Gastrocnemius medialis (tissue), 4 donors: ENCODE measurements at regions of chr9 and their contacts with region 1.

Region 1: DNA sequence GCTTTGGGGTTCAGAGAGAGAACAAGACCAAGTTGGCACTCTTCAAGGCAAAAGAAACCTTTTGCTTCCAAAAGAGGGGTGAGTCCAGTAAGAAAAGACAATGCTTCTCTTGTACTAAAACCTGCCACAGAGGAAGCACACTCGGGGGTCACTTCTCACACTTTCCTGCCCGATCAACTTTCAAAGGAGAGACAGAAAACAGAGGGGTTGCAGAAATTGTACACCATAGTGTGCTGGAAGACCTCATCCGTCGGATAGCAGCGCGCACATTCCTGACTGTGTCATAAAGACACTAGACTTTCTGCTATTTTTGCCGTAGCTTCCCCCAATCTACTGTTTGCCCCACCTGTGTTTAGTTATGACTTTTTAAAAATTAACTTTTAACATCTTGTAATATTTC is 66.9 kb downstream of the OR2K2 start:
- DNase-seq: no peak
- ATAC-seq: no peak
- H3K4me3 ChIP-seq: no peak overlapping the region
- H3K27ac ChIP-seq: no peak overlapping the region
- H3K4me1 ChIP-seq: no peaks in the 10 kb centered on the region
- H3K27me3 ChIP-seq: no peaks in the 10 kb centered on the region
- CTCF ChIP-seq: no peak
- POLR2A ChIP-seq: no peak

Region 2: GRCh38 chr9:111118256-111118948 is 144.7 kb before region 1 on chr9:
- in situ Hi-C with region 1: loop called in 1 of 4 experiments (anchors 10 kb)
- intact Hi-C with region 1: no loop called
- DNase-seq: no peak
- ATAC-seq: no peak
- H3K4me3 ChIP-seq: no peak overlapping the region
- H3K27ac ChIP-seq: no peak overlapping the region
- H3K4me1 ChIP-seq: no peaks in the 10 kb centered on the region
- H3K27me3 ChIP-seq: no peaks in the 10 kb centered on the region
- CTCF ChIP-seq: no peak
- POLR2A ChIP-seq: no peak

Region 3: GRCh38 chr9:111195766-111196165 is 67.3 kb before region 1 on chr9:
- in situ Hi-C with region 1: no loop called
- intact Hi-C with region 1: no loop called
- DNase-seq: no peak
- ATAC-seq: no peak
- H3K4me3 ChIP-seq: no peak overlapping the region
- H3K27ac ChIP-seq: no peak overlapping the region
- H3K4me1 ChIP-seq: no peaks in the 10 kb centered on the region
- H3K27me3 ChIP-seq: no peaks in the 10 kb centered on the region
- CTCF ChIP-seq: no peak
- POLR2A ChIP-seq: no peak